ENCODE measurements at regions of chr11 and their contacts with region 1.

Region 1: DNA sequence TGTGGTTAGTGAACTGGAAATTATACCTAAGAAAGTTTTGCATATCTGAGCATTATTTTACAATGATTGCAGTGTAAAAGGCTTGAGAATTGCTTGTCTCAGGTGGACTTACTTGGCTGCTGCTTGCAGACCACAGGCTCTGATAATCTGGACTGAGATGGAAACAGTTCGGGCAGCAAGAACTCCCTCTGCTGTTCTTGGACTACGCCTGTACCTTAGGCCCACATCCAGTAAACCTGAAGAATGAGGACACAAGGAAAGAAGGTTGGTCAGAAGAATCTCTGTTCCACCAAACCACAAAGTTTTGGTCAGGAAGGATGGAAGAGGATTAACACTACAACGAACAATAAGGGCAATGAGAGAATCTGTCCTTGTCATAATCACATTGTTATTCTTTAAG is 80.1 kb downstream of the C2CD3 start:
- DNase-seq: no peak
- H3K4me3 ChIP-seq: no peak overlapping the region
- H3K27ac ChIP-seq: no peak overlapping the region
- H3K4me1 ChIP-seq: peaks cover 4% of the 10 kb centered on the region
- H3K27me3 ChIP-seq: no peaks in the 10 kb centered on the region
- CTCF ChIP-seq: peak; percentile 59

Region 2: DNA sequence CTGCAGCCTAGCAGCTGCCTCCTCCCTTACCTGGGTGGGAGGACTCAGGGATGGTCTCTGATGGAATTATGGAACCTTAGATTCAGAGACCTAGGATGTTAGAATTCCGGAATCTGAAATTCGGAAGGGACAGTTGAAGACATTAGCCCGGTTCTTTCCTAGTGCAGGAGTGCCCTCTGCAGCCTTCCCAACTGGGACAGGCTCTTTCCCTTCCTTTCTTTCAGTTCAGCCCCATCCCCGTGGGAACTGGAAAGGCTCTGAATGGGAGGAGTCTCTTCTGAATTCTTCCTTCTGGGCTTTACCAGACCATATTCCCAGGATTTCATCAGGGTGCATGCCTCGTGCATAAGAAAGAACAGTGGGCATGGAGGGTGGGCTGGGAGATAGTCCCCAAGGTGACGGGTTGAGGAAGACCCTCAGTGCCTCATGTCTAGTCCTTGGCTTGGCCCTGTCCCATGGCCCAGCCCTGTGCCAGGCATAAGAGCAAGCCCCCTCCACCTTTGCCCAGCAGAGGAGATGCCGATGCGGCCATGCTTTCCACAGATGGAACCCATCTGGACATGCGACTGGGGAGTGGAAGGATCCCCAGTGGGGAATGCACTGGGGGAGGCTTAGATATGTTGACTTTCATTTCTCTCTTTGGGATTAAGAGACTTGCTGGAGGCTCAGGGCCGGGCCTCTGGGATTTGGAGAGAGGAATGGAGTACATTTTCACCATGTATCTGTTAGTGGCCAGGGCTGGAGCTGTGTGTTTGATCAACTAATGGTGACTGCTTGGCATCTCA is 125.4 kb before region 1 on chr11:
- CTCF ChIA-PET with region 1: interaction called, 3 read pairs
- POLR2A ChIA-PET with region 1: no interaction called
- intact Hi-C with region 1: loop called (anchors 1 kb)
- DNase-seq: no peak
- H3K4me3 ChIP-seq: no peak overlapping the region
- H3K27ac ChIP-seq: no peak overlapping the region
- H3K4me1 ChIP-seq: no peaks in the 10 kb centered on the region
- H3K27me3 ChIP-seq: no peaks in the 10 kb centered on the region
- CTCF ChIP-seq: no peak

Region 3: DNA sequence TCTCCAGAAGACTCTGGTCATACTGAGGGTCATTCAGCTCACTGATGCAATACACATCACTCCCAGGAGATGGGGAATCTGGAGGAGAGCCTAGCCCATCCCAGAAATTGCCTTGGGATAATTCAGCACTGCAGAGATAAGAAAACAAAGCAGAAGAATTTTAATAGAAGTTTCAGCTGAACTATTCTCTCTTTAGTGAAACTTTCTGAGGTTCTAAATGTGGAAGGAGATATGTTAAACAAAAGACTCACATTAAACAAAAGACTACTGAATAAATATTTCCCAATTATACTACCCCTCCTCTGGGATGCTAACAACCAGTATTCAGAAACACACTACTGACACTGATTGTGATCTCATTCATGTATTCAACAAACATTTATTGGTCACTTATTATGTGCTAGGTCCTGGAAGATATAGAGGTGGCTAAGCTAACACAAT is 32.3 kb after region 1 on chr11:
- CTCF ChIA-PET with region 1: no interaction called
- POLR2A ChIA-PET with region 1: no interaction called
- intact Hi-C with region 1: no loop called
- DNase-seq: no peak
- H3K4me3 ChIP-seq: no peak overlapping the region
- H3K27ac ChIP-seq: no peak overlapping the region
- H3K4me1 ChIP-seq: no peaks in the 10 kb centered on the region
- H3K27me3 ChIP-seq: no peaks in the 10 kb centered on the region
- CTCF ChIP-seq: no peak

Measured in PC-9 (cell line).